Activated naive CD4-positive, alpha-beta T cell treated with anti-CD3 and anti-CD28 coated beads for 36 hours (primary cell): ENCODE measurements at regions of chr9 and their contacts with region 1.

Region 1: GRCh38 chr9:111483862-111484571 is at the start of gene ECPAS:
- DNase-seq: peak; percentile 66
- H3K4me3 Mint-ChIP-seq: peak within 1 kb of the TSS; percentile 78
- H3K27ac Mint-ChIP-seq: peak within 1 kb of the TSS; percentile 83
- H3K4me1 Mint-ChIP-seq: peaks cover 29% of the 10 kb centered on the region
- H3K27me3 Mint-ChIP-seq: peaks cover under 1% of the 10 kb centered on the region
- total RNA-seq, gene ECPAS: 56.8 to 58.1 TPM

Region 2: DNA sequence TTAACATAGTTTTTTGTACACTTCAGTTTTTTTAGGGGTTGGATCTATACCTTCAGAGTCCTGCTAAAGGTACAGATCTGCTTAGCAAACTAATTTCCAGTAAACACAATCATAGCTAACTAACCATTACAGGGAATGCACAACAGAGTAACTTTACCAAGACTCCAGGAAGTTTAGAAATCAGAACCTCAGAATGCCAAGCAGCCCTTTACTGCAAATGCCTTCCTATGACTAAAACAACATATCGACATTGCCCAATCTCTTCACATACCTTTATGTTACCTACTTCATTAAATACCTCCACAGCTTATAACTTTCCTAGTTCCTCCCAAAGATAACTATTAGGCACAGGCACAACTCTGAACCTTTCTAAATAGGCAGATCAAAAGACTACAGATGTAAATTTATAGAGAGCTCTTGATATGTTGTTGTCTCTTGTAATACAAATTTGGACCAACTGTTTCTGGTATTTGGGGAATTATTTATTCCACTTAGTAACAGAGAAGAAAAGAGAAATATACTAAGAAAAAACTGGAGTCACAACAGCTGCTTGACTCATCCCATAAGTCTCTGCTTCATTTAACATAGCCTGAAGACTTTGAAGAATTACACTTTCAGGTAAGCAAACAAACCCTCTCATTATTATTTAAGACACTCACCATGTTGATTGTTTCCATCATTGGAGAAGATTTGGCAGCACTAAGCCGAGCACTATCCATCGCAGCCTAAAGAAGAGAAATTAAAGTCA is 108.0 kb before region 1 on chr9:
- CTCF ChIA-PET with region 1: no interaction called
- intact Hi-C with region 1: no loop called
- DNase-seq: no peak
- H3K4me3 Mint-ChIP-seq: no peak overlapping the region
- H3K27ac Mint-ChIP-seq: no peak overlapping the region
- H3K4me1 Mint-ChIP-seq: no peaks in the 10 kb centered on the region
- H3K27me3 Mint-ChIP-seq: no peaks in the 10 kb centered on the region

Region 3: DNA sequence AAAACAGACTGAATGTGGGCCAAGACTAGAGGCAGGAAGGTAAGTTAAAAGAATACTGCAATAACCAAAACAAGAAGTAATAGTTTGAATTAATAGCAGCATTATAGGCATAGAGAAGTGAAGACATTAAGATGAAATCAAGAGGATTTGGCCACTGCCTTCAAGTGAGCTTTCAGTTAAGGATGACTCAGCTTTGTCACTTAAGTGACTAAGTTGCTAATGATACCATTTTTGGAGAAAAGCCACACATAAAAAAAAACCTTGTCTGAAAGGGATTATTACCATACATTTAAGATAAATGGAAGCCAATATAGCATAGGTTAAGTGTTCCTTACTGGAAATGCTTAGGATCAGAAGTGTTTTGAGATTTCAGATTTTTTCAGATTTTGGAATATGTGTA is 56.8 kb before region 1 on chr9:
- CTCF ChIA-PET with region 1: interaction called, 3 read pairs
- intact Hi-C with region 1: loop called (anchors 5 kb)
- DNase-seq: no peak
- H3K4me3 Mint-ChIP-seq: no peak overlapping the region
- H3K27ac Mint-ChIP-seq: no peak overlapping the region
- H3K4me1 Mint-ChIP-seq: peaks cover 9% of the 10 kb centered on the region
- H3K27me3 Mint-ChIP-seq: no peaks in the 10 kb centered on the region

Region 4: DNA sequence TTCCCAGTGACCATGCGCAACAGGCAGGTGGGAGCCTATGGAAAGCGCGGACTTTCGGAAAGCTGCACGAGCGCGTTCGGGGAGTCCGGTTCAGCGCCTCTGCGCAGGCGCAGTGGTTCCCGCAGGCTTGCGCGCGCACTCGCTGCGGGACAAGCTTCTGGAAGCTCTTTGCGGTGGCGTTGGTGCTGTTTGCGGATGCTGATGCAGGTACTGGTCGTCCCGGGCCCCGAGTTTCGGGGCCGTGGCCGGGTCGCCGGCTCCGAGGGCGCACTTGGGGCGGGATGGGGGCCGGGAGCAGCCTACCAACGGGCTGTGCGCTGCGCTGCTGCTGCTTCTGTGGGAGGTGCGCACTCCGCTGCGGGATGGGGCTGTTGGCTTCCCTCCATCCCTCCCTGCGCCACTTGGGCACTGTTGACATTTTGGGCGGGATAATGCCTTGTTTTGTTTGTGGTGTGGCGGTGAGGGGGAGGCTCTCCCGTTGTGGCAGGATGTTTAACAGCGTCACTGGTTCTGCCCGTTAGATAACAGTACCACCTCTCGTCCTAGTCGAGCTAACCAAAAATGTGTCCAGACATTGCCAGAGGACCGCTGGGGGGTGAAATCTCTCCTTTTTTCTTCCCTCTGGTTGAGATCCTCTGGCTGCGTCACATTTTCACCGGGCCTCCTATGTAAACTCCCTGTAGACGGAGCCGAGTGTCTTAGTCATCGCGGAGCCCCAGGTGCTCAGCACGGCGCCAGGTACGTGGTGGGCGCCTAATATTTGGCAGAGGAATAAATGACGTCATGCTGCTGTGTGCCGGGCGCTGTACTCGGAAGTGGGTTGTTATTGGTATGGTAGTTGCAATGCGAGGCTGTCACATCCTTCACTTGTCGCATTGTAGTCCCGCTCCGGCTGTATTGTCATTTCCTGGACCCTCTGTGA is 41.3 kb after region 1 on chr9 and contains the start of gene ZNF483:
- CTCF ChIA-PET with region 1: interaction called, 3 read pairs
- intact Hi-C with region 1: loop called (anchors 1 kb)
- DNase-seq: peak; percentile 73
- H3K4me3 Mint-ChIP-seq: peak within 1 kb of the TSS; percentile 89
- H3K27ac Mint-ChIP-seq: peak within 1 kb of the TSS; percentile 80
- H3K4me1 Mint-ChIP-seq: peaks cover 11% of the 10 kb centered on the region
- H3K27me3 Mint-ChIP-seq: no peaks in the 10 kb centered on the region
- total RNA-seq, gene ZNF483: 2.3 TPM

Region 5: DNA sequence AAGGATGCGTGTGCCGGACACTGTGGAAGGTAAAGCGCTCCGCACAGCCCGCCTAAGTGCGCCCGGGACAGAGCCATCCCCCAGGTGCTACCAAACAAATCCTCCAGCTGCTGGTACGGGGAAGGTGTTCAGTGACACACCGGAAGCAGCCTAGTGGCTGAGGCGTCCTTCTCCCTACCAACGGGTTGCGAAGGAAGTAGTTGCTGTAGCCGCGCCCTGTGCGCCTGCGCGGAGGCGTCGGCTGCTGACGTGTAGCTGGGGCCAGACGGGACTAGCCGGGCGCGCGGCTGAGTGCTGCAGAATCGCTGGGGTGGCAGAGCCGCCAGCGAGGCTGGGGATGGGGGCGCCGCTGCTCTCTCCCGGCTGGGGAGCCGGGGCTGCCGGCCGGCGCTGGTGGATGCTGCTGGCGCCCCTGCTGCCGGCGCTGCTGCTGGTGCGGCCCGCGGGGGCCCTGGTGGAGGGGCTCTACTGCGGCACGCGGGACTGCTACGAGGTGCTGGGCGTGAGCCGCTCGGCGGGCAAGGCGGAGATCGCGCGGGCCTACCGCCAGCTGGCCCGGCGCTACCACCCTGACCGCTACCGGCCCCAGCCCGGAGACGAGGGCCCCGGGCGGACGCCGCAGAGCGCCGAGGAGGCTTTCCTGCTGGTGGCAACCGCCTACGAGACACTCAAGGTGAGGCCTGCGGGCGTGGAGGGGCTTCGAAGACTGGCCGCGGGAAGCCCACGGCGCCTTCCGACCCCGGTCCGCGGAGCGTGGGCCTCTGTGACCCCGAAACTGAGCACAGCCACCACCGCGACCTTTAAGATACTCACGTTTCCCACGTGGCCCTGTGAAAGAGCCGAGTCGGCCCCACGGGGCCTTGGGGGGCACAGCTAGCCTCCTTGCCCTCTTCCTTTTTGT is 147.3 kb after region 1 on chr9 and contains the start of gene DNAJC25:
- CTCF ChIA-PET with region 1: no interaction called
- intact Hi-C with region 1: loop called (anchors 1 kb)
- DNase-seq: peak; percentile 97
- H3K4me3 Mint-ChIP-seq: peak within 1 kb of the TSS; percentile 92
- H3K27ac Mint-ChIP-seq: peak within 1 kb of the TSS; percentile 79
- H3K4me1 Mint-ChIP-seq: peaks cover 42% of the 10 kb centered on the region
- H3K27me3 Mint-ChIP-seq: no peaks in the 10 kb centered on the region
- total RNA-seq, gene DNAJC25: 3.4 to 3.9 TPM

Region 6: DNA sequence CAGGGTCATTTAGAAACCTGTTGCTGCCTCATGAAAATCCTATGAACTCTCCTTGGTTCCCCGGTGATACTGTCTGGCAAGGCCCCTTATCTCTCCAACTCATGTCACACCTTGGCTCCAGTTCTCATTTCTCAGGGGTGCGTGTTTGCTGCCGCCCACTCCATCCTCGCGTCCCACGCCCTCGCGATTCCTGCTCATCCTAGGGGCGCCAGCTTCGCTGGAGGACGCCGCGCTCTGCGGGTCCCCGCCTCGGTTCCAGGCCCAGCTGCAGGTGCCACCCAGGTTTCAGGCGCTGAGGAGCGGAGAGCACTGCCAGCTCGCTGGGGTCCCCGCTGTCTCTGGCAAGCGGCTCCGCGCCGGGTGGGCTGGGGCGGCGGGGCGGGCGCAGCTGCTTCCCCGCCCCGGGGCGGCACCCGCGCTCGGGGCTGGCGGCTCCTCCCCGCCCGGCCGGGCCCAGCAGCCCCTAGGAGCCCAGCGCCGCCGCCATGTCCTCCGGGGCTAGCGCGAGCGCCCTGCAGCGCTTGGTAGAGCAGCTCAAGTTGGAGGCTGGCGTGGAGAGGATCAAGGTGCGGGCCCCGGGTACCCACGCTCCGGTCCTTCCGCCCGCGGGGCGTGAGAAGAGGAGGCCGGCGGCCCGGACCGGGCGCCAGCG is 177.3 kb after region 1 on chr9 and contains the start of gene GNG10:
- CTCF ChIA-PET with region 1: no interaction called
- intact Hi-C with region 1: loop called (anchors 2 kb)
- DNase-seq: peak; percentile 63
- H3K4me3 Mint-ChIP-seq: peak within 1 kb of the TSS; percentile 97
- H3K27ac Mint-ChIP-seq: peak within 1 kb of the TSS; percentile 95
- H3K4me1 Mint-ChIP-seq: peaks cover 31% of the 10 kb centered on the region
- H3K27me3 Mint-ChIP-seq: peaks cover 2% of the 10 kb centered on the region
- total RNA-seq, gene GNG10: 20.6 to 21.1 TPM

Region 7: DNA sequence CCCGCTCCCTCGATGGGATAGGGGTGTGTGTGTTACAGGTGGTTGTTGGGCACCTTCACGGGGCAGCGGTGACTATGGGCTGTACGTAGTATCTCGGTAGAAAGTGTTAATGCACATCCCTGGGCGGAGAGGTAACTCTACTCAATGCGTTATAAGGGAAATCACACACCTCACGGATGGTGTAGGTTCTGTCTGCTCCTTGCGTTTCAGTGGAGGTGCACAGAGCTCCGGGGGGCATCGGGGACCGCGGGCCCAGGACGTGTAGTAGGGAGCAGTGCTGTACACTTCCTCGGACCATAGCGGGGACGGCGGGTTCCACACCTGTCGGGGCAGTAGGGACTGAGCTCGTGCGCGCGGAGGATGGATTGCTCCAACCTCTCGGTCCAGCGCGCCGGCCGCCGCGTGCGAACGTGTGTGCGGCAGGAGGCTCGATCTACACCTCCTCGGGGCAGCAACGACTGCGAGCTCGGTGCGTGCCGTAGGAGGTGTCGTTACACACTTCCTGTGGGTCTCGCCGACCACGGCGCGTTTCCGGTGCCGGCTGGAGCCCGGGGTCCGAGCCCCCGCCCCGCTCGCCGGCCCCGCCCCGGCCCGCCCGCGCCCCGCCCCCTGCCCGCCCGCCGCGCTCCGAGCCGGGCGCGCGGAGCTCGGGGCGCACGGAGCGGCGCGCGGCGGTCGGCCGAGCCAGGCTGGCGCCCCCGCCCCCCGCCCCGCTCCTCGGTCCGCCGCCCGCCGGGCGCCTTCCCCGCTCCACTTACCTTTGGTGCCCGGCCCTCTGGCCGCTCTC is 1002.4 kb after region 1 on chr9 and contains the start of gene KIAA1958:
- CTCF ChIA-PET with region 1: no interaction called
- intact Hi-C with region 1: loop called (anchors 5 kb)
- DNase-seq: peak; percentile 91
- H3K4me3 Mint-ChIP-seq: peak within 1 kb of the TSS; percentile 93
- H3K27ac Mint-ChIP-seq: peak within 1 kb of the TSS; percentile 88
- H3K4me1 Mint-ChIP-seq: peaks cover 34% of the 10 kb centered on the region
- H3K27me3 Mint-ChIP-seq: no peaks in the 10 kb centered on the region
- total RNA-seq, gene KIAA1958: 6.7 to 7.6 TPM

Region 8: GRCh38 chr9:112750111-112750767 is 1266.2 kb after region 1 on chr9 and contains the start of gene SNX30:
- CTCF ChIA-PET with region 1: no interaction called
- intact Hi-C with region 1: loop called (anchors 5 kb)
- DNase-seq: peak; percentile 84
- H3K4me3 Mint-ChIP-seq: peak within 1 kb of the TSS; percentile 81
- H3K27ac Mint-ChIP-seq: peak within 1 kb of the TSS; percentile 74
- H3K4me1 Mint-ChIP-seq: peaks cover 63% of the 10 kb centered on the region
- H3K27me3 Mint-ChIP-seq: no peaks in the 10 kb centered on the region
- total RNA-seq, gene SNX30: 4.1 to 4.6 TPM